GM12878 (cell line): ENCODE measurements at regions of chr4 and their contacts with region 1.

Region 1: DNA sequence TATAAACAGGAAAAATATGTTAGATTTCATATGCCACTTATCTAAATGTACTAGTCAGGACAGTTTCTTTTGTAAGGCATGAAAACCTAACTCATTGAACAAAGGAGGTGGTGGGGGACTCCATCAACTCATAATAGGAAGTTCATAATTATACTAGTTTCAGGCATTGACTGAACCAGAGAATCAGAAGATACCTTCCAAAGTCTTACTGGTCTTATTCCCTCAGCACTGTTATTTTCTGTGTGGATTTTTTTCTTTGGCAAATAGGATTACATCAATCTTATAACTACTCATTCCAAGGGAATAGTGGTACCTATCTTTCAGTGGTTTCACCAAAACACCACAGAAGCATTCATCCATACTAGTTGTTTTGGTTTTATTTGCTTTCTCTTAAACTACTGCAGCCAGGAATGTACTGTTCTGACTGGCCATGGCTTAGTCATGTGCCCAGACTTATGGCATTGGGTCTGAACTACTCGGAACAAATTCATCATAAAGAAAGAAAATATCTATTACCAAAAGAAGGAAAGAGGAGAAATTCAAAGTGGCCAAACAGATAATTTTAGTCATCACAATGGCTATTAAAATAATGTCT is 273.9 kb downstream of the ARAP2 start:
- DNase-seq: no peak
- ATAC-seq: peak; percentile 79
- H3K4me3 ChIP-seq: no peak overlapping the region
- H3K27ac ChIP-seq: no peak overlapping the region
- H3K4me1 ChIP-seq: no peaks in the 10 kb centered on the region
- H3K27me3 ChIP-seq: no peaks in the 10 kb centered on the region
- CTCF ChIP-seq: no peak
- EP300 ChIP-seq: no peak
- POLR2A ChIP-seq: no peak
- RAD21 ChIP-seq: no peak

Region 2: DNA sequence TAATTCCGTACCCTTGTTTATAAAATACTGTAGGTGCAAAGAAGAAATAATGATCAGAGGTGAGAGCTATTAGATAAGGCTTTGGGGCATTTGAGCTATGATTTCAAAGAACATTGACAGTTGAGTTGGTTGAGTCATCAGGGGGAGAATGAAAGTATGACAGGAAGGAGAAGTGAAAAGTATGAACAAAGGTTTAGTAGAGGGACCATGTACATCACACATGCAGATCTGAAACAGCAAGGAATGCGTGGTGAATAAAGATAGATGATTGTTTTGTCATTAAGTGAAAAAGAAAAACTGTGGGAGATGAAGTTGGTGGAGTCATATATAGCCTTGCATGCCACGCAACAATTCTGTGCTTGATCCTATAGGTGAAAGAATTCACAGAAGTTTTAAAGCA is 110.7 kb after region 1 on chr4:
- CTCF ChIA-PET with region 1: no interaction called
- POLR2A ChIA-PET with region 1: no interaction called
- RAD21 ChIA-PET with region 1: interaction called, 3 read pairs
- SMC1A ChIA-PET with region 1: no interaction called
- in situ Hi-C with region 1: no loop called
- intact Hi-C with region 1: loop called (anchors 1 kb)
- DNase-seq: peak; percentile 53
- ATAC-seq: peak; percentile 97
- H3K4me3 ChIP-seq: no peak overlapping the region
- H3K27ac ChIP-seq: peak overlapping the region; percentile 49
- H3K4me1 ChIP-seq: peaks cover 6% of the 10 kb centered on the region; the same call in 1 of the 2 replicates
- H3K27me3 ChIP-seq: no peaks in the 10 kb centered on the region
- CTCF ChIP-seq: no peak
- EP300 ChIP-seq: peak; percentile 82 to 95
- POLR2A ChIP-seq: no peak
- RAD21 ChIP-seq: no peak